Cardiac septum (tissue), 1 donor: ENCODE measurements at regions of chr16 and their contacts with region 1.

Region 1: GRCh38 chr16:30445408-30446202 is at the start of gene SEPHS2:
- DNase-seq: peak; percentile 100
- total RNA-seq, gene SEPHS2: 27.3 TPM

Region 2: DNA sequence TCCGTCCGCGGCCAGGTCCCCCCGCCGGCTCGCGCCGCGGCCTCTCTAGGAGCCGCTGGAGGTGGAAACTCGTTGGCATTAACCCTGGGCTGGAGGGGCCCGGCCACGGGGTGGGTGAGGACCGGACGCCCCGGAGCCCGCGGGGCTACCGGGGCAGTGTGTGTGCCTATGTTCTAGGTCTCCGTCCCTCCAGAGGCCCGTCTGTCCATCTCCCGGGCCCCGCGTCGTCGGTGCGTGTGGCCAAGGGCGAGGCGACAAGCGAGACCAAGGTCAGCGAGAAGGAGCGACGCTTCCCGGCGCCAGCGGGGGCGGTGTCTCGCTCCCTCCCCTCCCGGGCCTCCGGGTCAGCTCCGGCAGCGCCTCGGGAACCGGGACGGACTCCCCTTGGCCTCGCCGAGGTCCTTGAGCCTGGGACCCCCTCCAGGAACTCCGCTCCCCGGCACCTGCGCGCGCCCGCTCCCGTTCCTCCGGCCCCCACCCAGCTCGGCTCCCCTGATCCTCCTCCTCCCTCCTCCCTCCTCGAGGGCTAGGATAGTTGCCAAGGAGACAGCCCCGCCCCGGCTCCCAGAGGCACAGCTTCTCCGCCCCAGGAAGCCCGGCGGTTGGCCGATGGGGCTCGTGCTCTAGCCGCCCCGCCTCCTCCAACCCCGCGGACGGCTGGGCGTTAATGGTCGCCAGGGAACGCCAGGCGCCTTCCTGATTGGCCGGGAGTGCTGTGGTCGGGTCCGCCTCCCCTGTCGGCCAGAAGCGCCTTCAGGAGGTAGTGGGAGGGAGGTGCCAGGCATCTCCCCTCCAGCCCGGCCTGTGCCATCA is 81.4 kb after region 1 on chr16:
- intact Hi-C with region 1: loop called (anchors 5 kb)
- DNase-seq: peak; percentile 100

Region 3: GRCh38 chr16:30692381-30693064 is 246.9 kb after region 1 on chr16:
- intact Hi-C with region 1: loop called (anchors 5 kb)
- DNase-seq: no peak